A549 (cell line): ENCODE measurements at regions of chr5 and their contacts with region 1.

Region 1: GRCh38 chr5:81851481-81852178 is 100.7 kb upstream of the SSBP2 start:
- DNase-seq: peak; percentile 89 to 92
- ATAC-seq: peak; percentile 93 to 94
- H3K4me3 ChIP-seq: peak overlapping the region; percentile 44
- H3K27ac ChIP-seq: peak overlapping the region; percentile 92 to 95
- H3K4me1 ChIP-seq: peaks cover 49% of the 10 kb centered on the region
- CTCF ChIP-seq: no peak
- EP300 ChIP-seq: peak; percentile 15 to 58; a peak in 1 of 5 replicates
- POLR2A ChIP-seq: no peak
- RAD21 ChIP-seq: peak; percentile 49 to 76

Region 2: GRCh38 chr5:81579262-81579924 is 272.2 kb before region 1 on chr5:
- CTCF ChIA-PET with region 1: no interaction called
- POLR2A ChIA-PET with region 1: interaction called, 19 read pairs
- DNase-seq: no peak
- ATAC-seq: no peak
- H3K4me3 ChIP-seq: no peak overlapping the region
- H3K27ac ChIP-seq: no peak overlapping the region
- H3K4me1 ChIP-seq: no peaks in the 10 kb centered on the region
- CTCF ChIP-seq: no peak
- EP300 ChIP-seq: no peak
- POLR2A ChIP-seq: no peak
- RAD21 ChIP-seq: no peak

Region 3: GRCh38 chr5:81751009-81751835 is 100.4 kb before region 1 on chr5 and contains the start of gene SSBP2:
- CTCF ChIA-PET with region 1: interaction called, 20 read pairs
- POLR2A ChIA-PET with region 1: interaction called, 197 read pairs
- DNase-seq: peak; percentile 73 to 98
- ATAC-seq: peak; percentile 81 to 90
- H3K4me3 ChIP-seq: peak within 1 kb of the TSS; percentile 92
- H3K27ac ChIP-seq: peak within 1 kb of the TSS; percentile 95 to 98
- H3K4me1 ChIP-seq: peaks cover 27% of the 10 kb centered on the region
- CTCF ChIP-seq: no peak
- EP300 ChIP-seq: peak; percentile 49 to 71; a peak in 2 of 5 replicates
- POLR2A ChIP-seq: peak; percentile 51
- RAD21 ChIP-seq: peak; percentile 60 to 92
- polyA plus RNA-seq, gene SSBP2: 14.2 and 17.0 TPM in 2 replicates

Region 4: GRCh38 chr5:81838307-81838906 is 13.2 kb before region 1 on chr5:
- CTCF ChIA-PET with region 1: interaction called, 32 read pairs
- POLR2A ChIA-PET with region 1: interaction called, 5 read pairs
- DNase-seq: peak in 1 of 2 experiments; percentile 62
- ATAC-seq: peak; percentile 95 to 98
- H3K4me3 ChIP-seq: no peak overlapping the region
- H3K27ac ChIP-seq: peak overlapping the region in 1 of 2 experiments; percentile 29; a peak in 2 of 6 replicates
- H3K4me1 ChIP-seq: 0 out of 3 replicates have a peak, but pooled peaks cover 8% of the 10 kb centered on the region
- CTCF ChIP-seq: peak; percentile 50
- EP300 ChIP-seq: no peak
- POLR2A ChIP-seq: no peak
- RAD21 ChIP-seq: peak; percentile 56 to 63

Region 5: GRCh38 chr5:81971712-81972495 is 120.3 kb after region 1 on chr5 and contains the start of gene ATG10:
- CTCF ChIA-PET with region 1: no interaction called
- POLR2A ChIA-PET with region 1: interaction called, 16 read pairs
- DNase-seq: peak; percentile 91 to 95
- ATAC-seq: peak; percentile 96 to 98
- H3K4me3 ChIP-seq: peak within 1 kb of the TSS; percentile 63
- H3K27ac ChIP-seq: peak within 1 kb of the TSS; percentile 90 to 94
- H3K4me1 ChIP-seq: peaks cover 13% of the 10 kb centered on the region
- CTCF ChIP-seq: no peak
- EP300 ChIP-seq: no peak
- POLR2A ChIP-seq: peak; percentile 72
- RAD21 ChIP-seq: peak in 1 of 2 experiments; percentile 26; a peak in 2 of 5 replicates
- polyA plus RNA-seq, gene ATG10: 12.7 and 14.0 TPM in 2 replicates